Body of pancreas (tissue), 4 donors: ENCODE measurements at regions of chr2 and their contacts with region 1.

Region 1: DNA sequence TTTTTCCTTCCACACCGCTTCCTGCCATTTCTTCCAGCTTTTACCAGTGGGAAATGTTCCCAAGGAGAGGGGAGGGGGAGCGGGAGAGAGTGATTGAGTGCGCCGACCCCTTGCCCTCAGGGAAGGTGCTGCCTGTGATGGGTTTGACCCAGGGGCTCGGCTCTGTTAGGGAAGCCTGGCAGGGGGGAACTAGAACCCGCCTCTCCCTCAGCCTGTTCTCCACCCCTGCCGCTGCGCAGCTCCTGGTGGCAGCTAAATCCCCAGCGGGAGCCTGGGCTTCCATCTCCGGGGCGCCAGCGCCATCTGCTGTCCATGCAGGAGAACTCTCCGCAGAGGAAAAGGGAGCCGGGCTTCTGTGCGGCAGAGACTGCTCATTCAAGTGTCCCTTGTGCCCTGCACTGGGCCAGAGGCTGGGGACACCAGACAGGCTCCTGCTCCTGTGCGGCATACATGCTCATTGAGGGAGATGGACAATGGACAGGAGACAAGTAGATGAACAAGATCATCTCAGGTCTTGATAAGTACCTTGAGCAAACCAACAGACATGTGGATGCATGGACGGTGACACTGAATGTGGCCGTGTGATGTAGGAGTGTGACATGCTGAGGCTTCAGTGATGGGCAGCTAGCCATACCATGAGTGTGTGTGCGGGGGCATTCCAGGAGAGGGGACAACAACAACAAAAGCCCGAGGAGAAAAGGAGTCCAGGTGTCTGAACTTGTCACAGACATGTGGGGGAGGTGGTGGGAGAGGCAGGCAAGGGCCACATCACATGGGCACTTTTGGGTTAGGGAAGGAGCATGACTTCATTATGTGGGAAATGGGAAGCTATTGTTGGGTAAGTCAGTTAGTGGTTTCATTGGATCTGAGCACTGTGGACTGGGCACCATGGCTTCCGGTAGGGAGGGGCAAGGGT is 13.3 kb downstream of the CHPF start:
- DNase-seq: peak; percentile 81 to 86 (median 82)
- ATAC-seq: peak; percentile 97
- H3K4me3 ChIP-seq: no peak overlapping the region
- H3K27ac ChIP-seq: no peak overlapping the region
- H3K4me1 ChIP-seq: peaks cover 14% of the 10 kb centered on the region
- H3K27me3 ChIP-seq: peaks cover 0 to 16% of the 10 kb centered on the region in 2 donors
- CTCF ChIP-seq: peak; percentile 92 to 99 (median 98)
- POLR2A ChIP-seq: no peak

Region 2: DNA sequence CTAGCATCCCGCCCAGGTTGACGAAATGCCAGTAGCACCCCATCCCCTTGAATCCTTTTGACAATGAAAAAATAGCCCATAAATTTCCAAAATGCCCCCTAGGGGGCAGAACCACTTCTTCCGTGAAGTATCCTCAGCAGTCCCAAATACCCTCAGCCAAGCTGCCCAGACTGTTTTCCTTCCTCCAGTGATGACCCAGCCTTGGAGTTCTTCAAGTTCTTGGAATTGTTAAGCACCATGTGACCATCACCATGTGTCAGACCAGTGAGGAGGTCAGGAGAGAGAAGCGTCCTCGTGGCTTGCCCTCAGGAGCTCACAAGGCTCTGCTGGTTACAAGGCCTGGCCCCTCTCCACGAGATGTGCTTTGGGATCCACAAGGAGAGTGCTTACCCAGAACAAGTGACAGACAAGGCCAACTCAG is 359.1 kb before region 1 on chr2:
- intact Hi-C with region 1: no loop called
- DNase-seq: peak; percentile 31 to 63 (median 48)
- ATAC-seq: peak; percentile 66
- H3K4me3 ChIP-seq: no peak overlapping the region
- H3K27ac ChIP-seq: peak overlapping the region in 1 of 4 donors; percentile 32
- H3K4me1 ChIP-seq: peaks cover 20% of the 10 kb centered on the region
- H3K27me3 ChIP-seq: no peaks in the 10 kb centered on the region
- CTCF ChIP-seq: peak; percentile 51 to 70 (median 64)
- POLR2A ChIP-seq: no peak

Region 3: GRCh38 chr2:219344751-219345430 is 185.4 kb before region 1 on chr2:
- intact Hi-C with region 1: no loop called
- DNase-seq: peak; percentile 19 to 66 (median 61)
- ATAC-seq: no peak
- H3K4me3 ChIP-seq: no peak overlapping the region
- H3K27ac ChIP-seq: no peak overlapping the region
- H3K4me1 ChIP-seq: no peaks in the 10 kb centered on the region
- H3K27me3 ChIP-seq: no peaks in the 10 kb centered on the region
- CTCF ChIP-seq: no peak
- POLR2A ChIP-seq: no peak

Region 4: DNA sequence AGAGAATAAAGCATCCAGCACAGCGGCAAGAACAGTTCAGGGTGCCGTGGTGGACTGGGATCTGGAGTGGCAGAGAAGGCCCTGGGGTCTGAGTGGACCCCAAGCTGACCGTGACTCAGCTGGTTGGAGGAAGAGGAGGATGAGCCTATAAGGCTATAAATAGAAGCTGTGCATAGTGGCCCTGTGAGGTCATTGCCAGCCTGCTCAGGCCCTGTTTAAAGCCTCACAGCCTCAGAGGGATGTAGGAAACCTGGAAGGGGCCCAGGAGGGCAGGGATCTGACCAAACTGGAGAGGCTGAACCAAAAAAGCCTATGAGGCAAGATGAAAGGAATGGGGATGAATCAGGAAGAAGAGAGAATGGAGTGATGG is 123.5 kb before region 1 on chr2:
- intact Hi-C with region 1: loop called (anchors 5 kb)
- DNase-seq: no peak
- ATAC-seq: no peak
- H3K4me3 ChIP-seq: no peak overlapping the region
- H3K27ac ChIP-seq: no peak overlapping the region
- H3K4me1 ChIP-seq: no peaks in the 10 kb centered on the region
- H3K27me3 ChIP-seq: no peaks in the 10 kb centered on the region
- CTCF ChIP-seq: no peak
- POLR2A ChIP-seq: no peak

Region 5: GRCh38 chr2:219475697-219476651 is 54.3 kb before region 1 on chr2:
- intact Hi-C with region 1: loop called (anchors 5 kb)
- DNase-seq: peak; percentile 76 to 87 (median 80)
- ATAC-seq: peak; percentile 84
- H3K4me3 ChIP-seq: no peak overlapping the region
- H3K27ac ChIP-seq: no peak overlapping the region
- H3K4me1 ChIP-seq: no peaks in the 10 kb centered on the region
- H3K27me3 ChIP-seq: no peaks in the 10 kb centered on the region
- CTCF ChIP-seq: peak; percentile 80 to 92 (median 84)
- POLR2A ChIP-seq: no peak

Region 6: DNA sequence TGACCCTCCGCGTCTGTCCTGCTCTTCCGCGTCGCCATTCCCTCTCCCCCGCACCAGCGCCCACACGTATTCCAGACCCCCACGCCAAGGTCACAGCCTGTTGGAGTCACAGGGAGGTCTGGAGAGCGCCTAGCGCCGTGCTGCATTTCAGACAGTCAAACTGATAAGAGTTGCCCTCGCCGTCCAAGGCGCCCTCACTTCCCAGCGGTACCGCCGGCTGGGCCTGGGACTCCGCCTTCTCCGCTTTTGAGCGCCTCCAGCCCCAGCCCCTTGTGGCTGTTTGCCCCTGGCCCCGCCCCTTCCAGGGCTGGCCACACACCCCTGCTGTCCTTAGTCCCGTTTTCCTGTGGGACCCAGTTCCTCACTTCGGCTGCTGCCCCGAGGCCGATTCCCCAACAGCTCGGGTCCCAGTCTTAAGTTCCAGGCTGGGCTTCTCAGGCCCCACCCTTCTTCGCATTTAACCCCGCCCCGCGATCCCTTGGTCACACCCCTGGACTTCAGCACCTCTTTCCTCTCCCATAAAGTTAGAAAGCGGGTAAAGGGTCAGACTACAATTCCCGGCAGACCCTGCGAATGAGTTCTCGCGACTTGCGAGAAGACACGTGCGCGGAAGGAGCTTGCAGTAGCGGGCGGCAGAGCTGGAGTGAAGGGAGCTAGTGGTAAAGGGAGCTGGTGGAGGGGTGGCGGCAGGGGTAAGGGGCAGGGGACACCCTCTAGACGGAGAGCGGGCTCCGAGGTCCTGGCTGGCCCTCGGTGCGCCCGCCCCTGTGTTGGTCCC is 31.8 kb before region 1 on chr2 and contains the start of gene GMPPA:
- intact Hi-C with region 1: loop called (anchors 5 kb)
- DNase-seq: peak; percentile 97 to 98 (median 97)
- ATAC-seq: peak; percentile 89
- H3K4me3 ChIP-seq: peak within 1 kb of the TSS; percentile 38 to 63
- H3K27ac ChIP-seq: peak within 1 kb of the TSS; percentile 87 to 97 (median 96)
- H3K4me1 ChIP-seq: peaks cover 39% of the 10 kb centered on the region
- H3K27me3 ChIP-seq: peaks cover 0 to 4% of the 10 kb centered on the region in 2 donors
- CTCF ChIP-seq: peak in 3 of 7 experiments; percentile 20 to 37 (median 28)
- POLR2A ChIP-seq: peak; percentile 39 to 83 (median 81)
- total RNA-seq, gene GMPPA: 40.5 to 57.4 TPM

Region 7: DNA sequence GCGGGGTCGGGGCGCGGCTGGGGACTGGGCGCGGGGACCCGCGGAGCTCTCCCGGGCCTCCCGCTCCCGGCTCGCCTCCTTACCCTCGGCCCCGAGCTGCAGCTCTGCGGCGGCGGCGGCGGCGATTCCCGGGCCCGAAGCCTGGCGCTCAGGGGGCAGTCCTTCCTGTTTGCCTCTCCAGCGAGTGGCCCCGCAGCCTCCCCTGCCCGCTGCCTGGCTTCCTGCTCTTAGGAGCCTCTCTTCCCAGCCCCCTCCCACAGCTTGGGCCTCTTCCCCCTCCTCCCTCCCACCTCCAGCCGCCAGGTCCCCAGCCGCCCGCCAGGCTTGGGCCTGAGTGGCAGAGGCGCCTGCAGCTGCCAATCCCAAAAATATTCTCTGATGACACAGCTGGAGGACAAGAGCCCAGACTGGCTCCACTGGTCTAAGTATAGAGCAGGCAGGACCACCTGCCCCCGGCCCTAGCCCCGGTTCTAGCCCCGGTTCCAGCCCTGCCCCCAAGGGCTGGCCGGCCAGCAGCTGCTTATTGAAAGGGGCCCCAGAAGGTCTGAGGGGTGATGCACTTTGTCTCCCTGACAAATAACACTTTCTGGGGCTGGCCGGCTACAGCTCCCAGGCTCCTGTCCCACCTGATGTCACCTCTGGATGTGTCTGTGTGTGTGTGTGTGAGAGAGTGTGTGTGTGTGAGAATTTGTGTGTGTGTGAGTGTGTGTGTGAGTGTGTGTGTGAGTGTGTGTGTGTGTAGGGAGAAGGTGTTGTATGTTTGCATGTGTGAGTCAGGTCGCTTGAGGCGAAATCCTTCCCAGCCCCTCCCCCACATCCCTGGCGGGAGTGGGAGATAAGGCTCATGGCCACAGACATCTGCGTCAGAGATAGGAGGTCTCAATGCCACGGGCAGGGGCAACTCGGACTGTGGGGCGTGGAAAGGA is 41.3 kb after region 1 on chr2 and contains the start of gene OBSL1:
- intact Hi-C with region 1: no loop called
- DNase-seq: peak; percentile 82 to 93 (median 88)
- ATAC-seq: peak; percentile 78
- H3K4me3 ChIP-seq: peak within 1 kb of the TSS; percentile 39 to 56
- H3K27ac ChIP-seq: peak within 1 kb of the TSS; percentile 65 to 91 (median 86)
- H3K4me1 ChIP-seq: peaks cover 32% of the 10 kb centered on the region
- H3K27me3 ChIP-seq: no peaks in the 10 kb centered on the region
- CTCF ChIP-seq: peak in 2 of 7 experiments; percentile 6 to 10
- POLR2A ChIP-seq: peak; percentile 17 to 70 (median 63)
- total RNA-seq, gene OBSL1: 119 to 185 TPM

Region 8: DNA sequence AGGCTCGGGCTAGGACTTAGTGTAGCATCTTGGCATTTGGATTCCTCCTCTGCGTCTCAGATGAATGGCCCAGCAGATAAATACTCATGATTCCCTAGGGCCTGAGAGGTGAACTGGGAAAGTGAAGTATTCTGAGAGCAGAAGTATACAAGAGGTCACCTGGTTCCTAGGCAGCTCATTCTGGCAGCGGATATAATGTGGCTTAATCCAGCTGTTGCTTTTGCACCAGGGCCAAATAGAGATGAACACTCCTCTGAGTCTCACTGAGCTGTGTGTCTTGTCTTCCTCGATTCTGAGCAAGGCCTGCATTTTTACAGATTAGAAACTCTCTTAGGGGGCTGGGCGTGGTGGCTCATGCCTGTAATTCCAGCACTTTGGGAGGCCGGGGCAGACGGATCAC is 293.3 kb after region 1 on chr2:
- intact Hi-C with region 1: no loop called
- DNase-seq: no peak
- ATAC-seq: no peak
- H3K4me3 ChIP-seq: no peak overlapping the region
- H3K27ac ChIP-seq: no peak overlapping the region
- H3K4me1 ChIP-seq: no peaks in the 10 kb centered on the region
- H3K27me3 ChIP-seq: no peaks in the 10 kb centered on the region
- CTCF ChIP-seq: no peak
- POLR2A ChIP-seq: no peak